Activated CD4-positive, alpha-beta memory T cell treated with anti-CD3 and anti-CD28 coated beads for 36 hours (primary cell): ENCODE measurements at regions of chr5 and their contacts with region 1.

Region 1: DNA sequence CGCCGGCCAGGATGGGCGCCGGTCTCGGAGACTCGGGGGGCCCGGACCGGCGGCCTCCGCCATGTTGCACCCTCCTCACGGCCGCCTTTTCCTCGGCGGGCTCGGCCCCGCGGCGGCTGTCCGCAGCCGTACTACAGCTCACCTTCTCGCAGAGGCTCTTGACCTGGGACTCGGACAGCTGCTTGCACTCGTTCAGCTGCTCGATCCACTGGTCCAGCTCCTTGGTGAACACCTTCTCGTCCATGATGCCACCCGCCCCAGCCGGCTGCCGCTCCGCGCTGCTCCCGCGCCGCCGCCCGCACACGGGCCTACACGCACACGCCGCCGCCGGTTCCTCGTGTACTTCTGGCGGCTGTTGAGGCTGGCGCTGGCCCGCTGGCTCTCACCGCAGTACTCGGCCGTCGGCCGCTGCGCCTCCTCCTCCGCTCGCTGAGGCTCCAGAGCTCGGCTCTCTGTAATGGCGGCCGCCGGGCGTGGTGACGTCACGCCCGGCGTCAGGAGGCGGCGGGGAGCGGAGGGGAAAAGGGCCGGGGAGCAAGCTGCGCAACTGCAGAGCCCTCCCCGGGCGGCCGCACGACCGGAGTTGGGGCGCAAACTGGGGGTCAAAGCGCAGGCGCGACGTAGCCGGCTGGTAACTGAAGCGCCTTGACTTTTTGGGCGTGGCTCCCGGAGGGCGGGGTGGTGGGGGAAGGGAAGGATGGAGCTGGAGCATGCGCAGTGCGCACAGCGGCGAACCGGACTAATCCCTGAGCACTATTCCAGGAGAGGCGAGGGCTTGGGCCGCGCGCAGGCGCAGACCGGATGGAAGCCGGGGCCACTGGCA is at the start of gene PPP2CA:
- DNase-seq: peak; percentile 100
- H3K4me3 Mint-ChIP-seq: peak within 1 kb of the TSS; percentile 95
- H3K27ac Mint-ChIP-seq: peak within 1 kb of the TSS; percentile 97
- H3K4me1 Mint-ChIP-seq: peaks cover 50% of the 10 kb centered on the region
- H3K27me3 Mint-ChIP-seq: no peaks in the 10 kb centered on the region
- total RNA-seq, gene PPP2CA: 144 to 164 TPM

Region 2: GRCh38 chr5:132736853-132737833 is 1488.7 kb before region 1 on chr5 and contains the start of gene KIF3A:
- CTCF ChIA-PET with region 1: no interaction called
- POLR2A ChIA-PET with region 1: no interaction called
- intact Hi-C with region 1: loop called (anchors 10 kb)
- DNase-seq: peak; percentile 99
- H3K4me3 Mint-ChIP-seq: peak within 1 kb of the TSS; percentile 84
- H3K27ac Mint-ChIP-seq: peak within 1 kb of the TSS; percentile 78
- H3K4me1 Mint-ChIP-seq: peaks cover 35% of the 10 kb centered on the region
- H3K27me3 Mint-ChIP-seq: peaks cover 2% of the 10 kb centered on the region
- total RNA-seq, gene KIF3A: 12.1 to 16.1 TPM

Region 3: DNA sequence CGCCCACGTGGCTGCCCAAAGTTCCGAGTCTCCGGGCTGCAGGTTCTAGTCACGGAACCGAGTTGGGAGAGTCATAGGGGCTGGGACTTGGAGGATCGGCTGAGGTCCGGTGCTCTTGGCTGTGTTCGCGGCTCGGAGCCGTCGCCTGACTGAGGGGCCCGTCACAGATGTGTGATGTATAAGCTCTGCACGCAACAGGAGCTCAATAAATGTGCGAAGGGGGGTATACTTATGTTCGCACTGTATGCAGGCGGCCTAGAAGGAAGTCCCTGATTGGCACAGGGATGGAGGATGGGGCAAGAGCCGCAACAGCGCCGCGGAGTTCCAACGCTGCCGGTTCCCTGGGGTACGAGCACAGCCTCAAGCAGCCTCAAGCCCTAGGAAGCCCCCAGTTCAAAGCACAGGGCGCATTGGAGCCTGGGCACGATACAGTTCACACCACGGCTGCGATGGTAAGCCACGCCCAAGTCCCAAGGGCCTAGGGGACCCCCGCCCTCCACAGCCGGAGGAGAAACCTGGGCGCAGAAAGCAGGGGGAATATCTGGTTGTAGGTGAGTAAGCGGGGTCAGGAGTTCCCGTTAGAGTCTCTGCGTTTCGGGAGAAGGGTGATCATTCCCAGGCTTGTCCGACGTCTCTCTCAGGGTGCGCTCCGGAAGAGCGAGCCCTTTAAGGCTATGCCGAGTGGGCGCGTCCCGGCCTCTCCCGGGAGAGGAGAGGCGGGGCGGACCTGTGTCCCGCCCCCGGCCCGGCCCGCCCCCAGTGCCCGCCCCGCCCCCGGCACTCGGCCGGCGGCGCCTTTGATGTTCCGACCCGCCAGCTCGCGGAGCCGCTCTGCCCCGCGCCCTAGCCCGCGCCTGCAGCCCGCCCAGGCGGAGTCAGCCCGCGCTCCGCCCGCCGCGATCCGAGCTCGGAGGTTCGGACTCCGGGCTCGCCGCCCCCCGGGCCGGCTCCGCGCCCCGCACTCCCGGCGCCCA is 111.6 kb before region 1 on chr5 and contains the start of gene TCF7:
- CTCF ChIA-PET with region 1: no interaction called
- POLR2A ChIA-PET with region 1: interaction called, 4 read pairs
- intact Hi-C with region 1: loop called (anchors 5 kb)
- DNase-seq: peak; percentile 86
- H3K4me3 Mint-ChIP-seq: peak within 1 kb of the TSS; percentile 84
- H3K27ac Mint-ChIP-seq: peak within 1 kb of the TSS; percentile 86
- H3K4me1 Mint-ChIP-seq: peaks cover 66% of the 10 kb centered on the region
- H3K27me3 Mint-ChIP-seq: no peaks in the 10 kb centered on the region
- total RNA-seq, gene TCF7: 59.3 to 65.6 TPM

Region 4: GRCh38 chr5:134209477-134210240 is 16.2 kb before region 1 on chr5:
- CTCF ChIA-PET with region 1: interaction called, 7 read pairs
- POLR2A ChIA-PET with region 1: interaction called, 10 read pairs
- intact Hi-C with region 1: no loop called
- DNase-seq: no peak
- H3K4me3 Mint-ChIP-seq: no peak overlapping the region
- H3K27ac Mint-ChIP-seq: no peak overlapping the region
- H3K4me1 Mint-ChIP-seq: peaks cover 44% of the 10 kb centered on the region
- H3K27me3 Mint-ChIP-seq: no peaks in the 10 kb centered on the region

Region 5: DNA sequence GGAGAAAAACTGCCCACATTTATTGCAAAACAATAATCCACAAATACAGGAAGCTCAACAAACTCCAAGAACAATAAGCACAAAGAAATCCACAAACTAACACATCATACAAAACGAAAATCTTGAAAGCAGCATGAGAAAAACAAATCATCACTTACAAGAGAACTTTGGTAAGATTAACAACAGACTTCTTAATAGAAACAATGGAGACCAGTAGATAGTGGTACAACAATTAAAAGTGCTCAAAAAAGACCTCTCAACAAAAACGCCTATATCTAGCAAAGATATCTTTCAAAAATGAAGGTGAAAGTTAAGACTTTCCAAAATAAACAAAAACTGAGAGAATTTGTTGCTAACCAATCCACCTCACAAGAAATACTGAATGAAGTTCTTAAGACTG is 102.8 kb after region 1 on chr5:
- CTCF ChIA-PET with region 1: no interaction called
- POLR2A ChIA-PET with region 1: no interaction called
- intact Hi-C with region 1: no loop called
- DNase-seq: no peak
- H3K4me3 Mint-ChIP-seq: no peak overlapping the region
- H3K27ac Mint-ChIP-seq: no peak overlapping the region
- H3K4me1 Mint-ChIP-seq: no peaks in the 10 kb centered on the region
- H3K27me3 Mint-ChIP-seq: no peaks in the 10 kb centered on the region

Region 6: DNA sequence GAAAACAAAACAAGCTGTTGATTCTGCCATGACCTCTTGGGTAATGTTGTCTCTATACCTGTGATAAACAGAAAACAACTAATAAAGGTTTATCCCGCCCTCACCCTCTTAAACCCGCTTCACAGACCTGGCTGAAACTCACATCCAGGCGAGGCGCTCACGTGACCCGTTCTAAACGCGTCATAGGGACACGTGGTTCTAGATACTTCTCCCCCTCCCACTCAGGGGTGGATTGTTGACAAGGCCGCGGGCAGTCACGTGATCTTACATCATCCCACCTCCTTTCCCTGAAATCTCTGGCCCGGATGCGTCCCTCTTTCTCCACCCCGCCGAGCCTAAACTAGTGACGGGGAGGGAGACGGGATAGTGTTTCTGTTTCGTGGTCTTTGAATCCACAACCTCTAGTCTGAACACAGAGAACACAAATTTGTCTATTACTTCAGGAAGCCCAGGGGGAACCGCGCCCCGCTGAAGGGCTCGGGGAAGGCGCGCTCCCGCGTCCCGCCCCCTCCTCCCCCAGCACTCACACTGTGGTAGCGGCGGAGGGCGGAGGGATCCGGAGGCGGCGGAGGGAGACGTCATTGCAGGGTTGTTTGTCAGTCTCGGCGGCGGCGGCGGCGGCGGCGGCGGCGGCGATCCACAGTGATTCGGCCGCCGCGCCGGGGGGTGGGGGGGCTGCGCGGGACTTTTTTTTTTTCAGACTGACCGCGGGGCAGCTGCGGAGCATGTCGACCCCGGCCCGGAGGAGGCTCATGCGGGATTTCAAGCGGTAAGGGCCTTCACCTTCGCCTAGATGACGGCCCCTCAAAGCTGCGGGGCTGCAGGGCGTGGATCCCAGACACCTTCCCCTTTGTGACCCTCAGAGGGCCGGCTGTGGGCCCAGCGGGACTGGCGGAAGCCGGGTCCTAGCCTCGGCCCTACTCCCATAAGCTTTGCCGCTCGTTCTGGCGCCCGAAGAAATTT is 145.3 kb after region 1 on chr5 and contains the start of gene UBE2B:
- CTCF ChIA-PET with region 1: interaction called, 3 read pairs
- POLR2A ChIA-PET with region 1: interaction called, 8 read pairs
- intact Hi-C with region 1: loop called (anchors 1 kb)
- DNase-seq: peak; percentile 98
- H3K4me3 Mint-ChIP-seq: peak within 1 kb of the TSS; percentile 92
- H3K27ac Mint-ChIP-seq: peak within 1 kb of the TSS; percentile 96
- H3K4me1 Mint-ChIP-seq: peaks cover 55% of the 10 kb centered on the region
- H3K27me3 Mint-ChIP-seq: peaks cover 2% of the 10 kb centered on the region
- total RNA-seq, gene UBE2B: 124 TPM

Region 7: GRCh38 chr5:134648425-134649162 is 422.8 kb after region 1 on chr5 and contains the start of gene SEC24A:
- CTCF ChIA-PET with region 1: no interaction called
- POLR2A ChIA-PET with region 1: interaction called, 4 read pairs
- intact Hi-C with region 1: loop called (anchors 1 kb)
- DNase-seq: peak; percentile 95
- H3K4me3 Mint-ChIP-seq: peak within 1 kb of the TSS; percentile 81
- H3K27ac Mint-ChIP-seq: peak within 1 kb of the TSS; percentile 99
- H3K4me1 Mint-ChIP-seq: peaks cover 22% of the 10 kb centered on the region
- H3K27me3 Mint-ChIP-seq: no peaks in the 10 kb centered on the region
- total RNA-seq, gene SEC24A: 30.8 to 31.4 TPM

Region 8: GRCh38 chr5:134904630-134905245 is 678.9 kb after region 1 on chr5 and contains the start of gene PCBD2:
- CTCF ChIA-PET with region 1: no interaction called
- POLR2A ChIA-PET with region 1: interaction called, 3 read pairs
- intact Hi-C with region 1: loop called (anchors 10 kb)
- DNase-seq: peak; percentile 96
- H3K4me3 Mint-ChIP-seq: peak within 1 kb of the TSS; percentile 95
- H3K27ac Mint-ChIP-seq: peak within 1 kb of the TSS; percentile 99
- H3K4me1 Mint-ChIP-seq: peaks cover 17% of the 10 kb centered on the region
- H3K27me3 Mint-ChIP-seq: no peaks in the 10 kb centered on the region
- total RNA-seq, gene PCBD2: 9.8 to 13.2 TPM